ENCODE measurements at regions of chr3 and their contacts with region 1.

Region 1: GRCh38 chr3:4571690-4572334 is 78.7 kb downstream of the ITPR1 start:
- DNase-seq: peak in 2 of 5 donors; percentile 7 to 10
- H3K4me3 ChIP-seq: no peak overlapping the region
- H3K4me3 Mint-ChIP-seq: no peak overlapping the region
- H3K27ac ChIP-seq: no peak overlapping the region
- H3K27ac Mint-ChIP-seq: peak overlapping the region in 1 of 7 donors; percentile 8
- H3K4me1 ChIP-seq: no peaks in the 10 kb centered on the region
- H3K4me1 Mint-ChIP-seq: peaks cover 8 to 40% (median 15%) of the 10 kb centered on the region in 4 donors
- H3K27me3 ChIP-seq: no peaks in the 10 kb centered on the region
- H3K27me3 Mint-ChIP-seq: no peaks in the 10 kb centered on the region

Region 2: DNA sequence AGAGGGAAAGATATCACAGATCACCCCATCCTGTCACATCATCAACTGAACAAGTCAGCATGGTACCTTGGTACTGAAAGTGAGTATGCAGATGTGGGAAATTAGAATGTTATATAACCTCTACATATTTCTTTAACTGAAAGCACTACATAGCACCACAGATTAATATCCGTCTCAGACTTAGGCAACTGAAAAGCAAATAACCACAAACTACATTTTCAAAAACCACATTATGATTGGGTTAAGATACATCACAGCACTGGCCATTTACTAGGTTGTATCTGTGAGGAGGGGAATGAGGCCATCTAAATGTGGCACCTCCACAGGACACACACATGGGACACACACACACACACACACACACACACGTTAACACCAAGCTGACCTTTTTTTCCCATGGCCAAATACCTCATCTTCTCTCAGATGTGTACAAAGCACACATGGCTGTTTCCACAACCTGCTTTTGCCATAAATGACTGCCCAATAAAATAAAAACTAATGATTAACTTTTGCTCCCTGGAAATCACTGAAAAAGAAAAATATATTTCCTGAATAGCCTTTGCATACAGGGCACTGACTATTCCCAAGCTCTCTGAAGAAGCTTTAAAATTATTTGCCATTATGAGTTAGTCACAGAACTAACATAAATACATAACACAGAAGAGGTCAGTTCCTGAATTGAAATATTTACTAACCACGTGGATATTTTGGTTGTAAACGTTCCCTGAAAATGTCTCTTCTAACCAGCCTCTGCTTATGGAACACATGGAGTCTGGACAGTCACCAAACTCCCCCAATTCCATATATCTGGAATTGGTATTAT is 164.9 kb before region 1 on chr3:
- CTCF ChIA-PET with region 1: no interaction called
- POLR2A ChIA-PET with region 1: no interaction called
- intact Hi-C with region 1: no loop called
- DNase-seq: no peak
- H3K4me3 ChIP-seq: no peak overlapping the region
- H3K4me3 Mint-ChIP-seq: no peak overlapping the region
- H3K27ac ChIP-seq: no peak overlapping the region
- H3K27ac Mint-ChIP-seq: peak overlapping the region in 1 of 7 donors; percentile 24
- H3K4me1 ChIP-seq: peaks cover 11% of the 10 kb centered on the region
- H3K4me1 Mint-ChIP-seq: peaks cover 13 to 27% (median 20%) of the 10 kb centered on the region in 4 donors
- H3K27me3 ChIP-seq: no peaks in the 10 kb centered on the region
- H3K27me3 Mint-ChIP-seq: no peaks in the 10 kb centered on the region

Region 3: GRCh38 chr3:4524088-4525023 is 47.5 kb before region 1 on chr3:
- CTCF ChIA-PET with region 1: interaction called, 10 read pairs
- POLR2A ChIA-PET with region 1: interaction called, 3 read pairs
- intact Hi-C with region 1: loop called (anchors 5 kb)
- DNase-seq: no peak
- H3K4me3 ChIP-seq: no peak overlapping the region
- H3K4me3 Mint-ChIP-seq: no peak overlapping the region
- H3K27ac ChIP-seq: no peak overlapping the region
- H3K27ac Mint-ChIP-seq: no peak overlapping the region
- H3K4me1 ChIP-seq: peaks cover 6% of the 10 kb centered on the region
- H3K4me1 Mint-ChIP-seq: peaks cover 8 to 23% (median 16%) of the 10 kb centered on the region in 4 donors
- H3K27me3 ChIP-seq: no peaks in the 10 kb centered on the region
- H3K27me3 Mint-ChIP-seq: no peaks in the 10 kb centered on the region

Measured in CD4-positive, alpha-beta memory T cell (primary cell).